Left colon (tissue), 2 donors: ENCODE measurements at regions of chrX and their contacts with region 1.

Region 1: GRCh38 chrX:95764972-95765451 is 919.6 kb upstream of the DIAPH2 start:
- DNase-seq: peak in 1 of 2 donors; percentile 3
- ATAC-seq: peak; percentile 81

Region 2: DNA sequence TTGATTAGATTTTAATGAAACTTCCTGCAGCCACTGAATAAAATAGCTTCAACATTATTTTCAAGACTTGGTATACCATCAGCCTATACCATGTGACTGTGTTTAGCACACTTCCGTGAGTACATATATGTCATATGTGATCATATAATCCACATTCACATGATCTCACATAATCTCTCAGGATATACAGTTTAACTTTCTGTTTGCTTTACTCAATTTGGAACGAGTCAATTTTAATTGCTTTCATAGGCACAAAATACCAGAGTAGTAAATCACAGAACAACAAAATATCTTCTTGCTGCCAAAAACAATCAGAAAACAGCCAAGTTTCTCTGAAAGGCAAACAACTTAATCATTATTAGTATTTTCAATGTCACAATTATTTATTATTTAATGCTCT is 188.6 kb after region 1 on chrX:
- intact Hi-C with region 1: no loop called
- DNase-seq: no peak
- ATAC-seq: no peak

Region 3: DNA sequence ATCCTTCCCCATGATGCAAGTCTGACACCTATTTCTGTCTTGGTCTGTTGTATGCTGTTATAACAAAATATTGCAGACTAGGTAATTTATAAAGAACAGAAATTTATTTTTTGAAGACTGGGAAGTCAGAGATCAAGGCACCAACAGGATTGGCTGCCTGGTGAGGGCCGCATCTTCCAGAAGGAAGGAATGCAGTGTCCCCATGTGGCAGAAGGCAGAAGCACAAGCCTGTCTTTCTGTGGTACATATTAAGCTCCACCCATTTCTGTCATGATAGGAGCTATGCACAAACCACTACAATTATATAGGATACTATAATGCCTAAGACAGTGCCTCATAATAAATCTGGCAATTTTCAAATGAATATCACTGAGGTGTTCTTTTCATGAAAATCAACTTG is 417.4 kb after region 1 on chrX:
- intact Hi-C with region 1: loop called in 1 of 2 experiments (anchors 10 kb)
- DNase-seq: peak in 1 of 2 donors; percentile 39
- ATAC-seq: peak; percentile 83